Activated T-helper 2 cell treated with anti-CD3 and anti-CD28 coated beads, Interferon-gamma antibody, Interleukin-2, Interleukin-4, amounts not matched to agents 10 μg/mL and 5 μg/mL and 100 μg/mL, durations not matched to agents 14 hours and 24 hours and 36 hours (primary cell): ENCODE measurements at regions of chr14 and their contacts with region 1.

Region 1: GRCh38 chr14:39229222-39229543 is 4.5 kb upstream of the MIA2 start:
- DNase-seq: peak; percentile 73
- H3K4me3 Mint-ChIP-seq: no peak overlapping the region
- H3K27ac Mint-ChIP-seq: peak overlapping the region; percentile 93
- H3K4me1 Mint-ChIP-seq: peaks cover 48% of the 10 kb centered on the region
- H3K27me3 Mint-ChIP-seq: no peaks in the 10 kb centered on the region

Region 2: GRCh38 chr14:38567703-38568102 is 661.5 kb before region 1 on chr14:
- intact Hi-C with region 1: no loop called
- DNase-seq: no peak
- H3K4me3 Mint-ChIP-seq: peak overlapping the region; percentile 7
- H3K27ac Mint-ChIP-seq: no peak overlapping the region
- H3K4me1 Mint-ChIP-seq: peaks cover 7% of the 10 kb centered on the region
- H3K27me3 Mint-ChIP-seq: no peaks in the 10 kb centered on the region

Region 3: DNA sequence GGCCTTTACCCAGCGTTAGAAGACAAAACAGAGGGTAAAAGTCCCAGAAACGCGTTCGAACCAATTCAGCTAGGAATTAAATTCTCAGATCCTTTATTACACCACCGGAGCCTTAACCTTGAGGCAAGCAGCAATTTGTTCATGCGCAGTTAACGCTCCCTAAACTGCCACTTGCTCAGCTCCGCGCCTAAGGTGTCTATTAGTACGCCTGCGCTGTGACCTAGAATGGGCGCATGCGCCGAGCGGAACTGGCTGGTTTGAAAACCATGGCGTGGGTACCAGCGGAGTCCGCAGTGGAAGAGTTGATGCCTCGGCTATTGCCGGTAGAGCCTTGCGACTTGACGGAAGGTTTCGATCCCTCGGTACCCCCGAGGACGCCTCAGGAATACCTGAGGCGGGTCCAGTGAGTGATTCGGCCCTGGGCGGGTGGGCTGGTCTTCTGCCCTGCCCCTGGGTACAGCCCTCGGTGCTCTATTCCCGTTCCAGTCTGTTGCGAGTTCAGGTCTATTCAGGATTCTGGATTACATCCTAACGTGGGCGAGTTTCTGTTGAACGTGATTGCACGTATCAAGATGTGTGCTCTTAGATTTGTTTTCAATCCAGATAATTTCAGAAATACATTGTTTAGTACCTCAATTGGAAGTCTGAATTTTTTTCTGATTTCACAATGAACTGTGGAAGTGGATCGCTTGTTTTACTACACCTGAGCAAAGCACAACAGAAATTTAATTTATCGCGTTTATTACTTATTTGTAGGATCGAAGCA is 114.9 kb before region 1 on chr14 and contains the start of gene GEMIN2:
- intact Hi-C with region 1: loop called (anchors 2 kb)
- DNase-seq: peak; percentile 94
- H3K4me3 Mint-ChIP-seq: peak within 1 kb of the TSS; percentile 96
- H3K27ac Mint-ChIP-seq: peak within 1 kb of the TSS; percentile 96
- H3K4me1 Mint-ChIP-seq: peaks cover 18% of the 10 kb centered on the region
- H3K27me3 Mint-ChIP-seq: no peaks in the 10 kb centered on the region
- total RNA-seq, gene GEMIN2: 22.0 and 22.1 TPM in 2 replicates

Region 4: GRCh38 chr14:39203659-39204606 is 25.2 kb before region 1 on chr14:
- intact Hi-C with region 1: loop called (anchors 1 kb)
- DNase-seq: no peak
- H3K4me3 Mint-ChIP-seq: no peak overlapping the region
- H3K27ac Mint-ChIP-seq: no peak overlapping the region
- H3K4me1 Mint-ChIP-seq: peaks cover 23% of the 10 kb centered on the region
- H3K27me3 Mint-ChIP-seq: no peaks in the 10 kb centered on the region

Region 5: GRCh38 chr14:39342768-39343167 is 113.6 kb after region 1 on chr14:
- intact Hi-C with region 1: loop called (anchors 1 kb)
- DNase-seq: no peak
- H3K4me3 Mint-ChIP-seq: no peak overlapping the region
- H3K27ac Mint-ChIP-seq: no peak overlapping the region
- H3K4me1 Mint-ChIP-seq: peaks cover 25% of the 10 kb centered on the region
- H3K27me3 Mint-ChIP-seq: no peaks in the 10 kb centered on the region

Region 6: GRCh38 chr14:39383026-39383660 is 154.0 kb after region 1 on chr14:
- intact Hi-C with region 1: loop called (anchors 2 kb)
- DNase-seq: no peak
- H3K4me3 Mint-ChIP-seq: no peak overlapping the region
- H3K27ac Mint-ChIP-seq: peak overlapping the region; percentile 36
- H3K4me1 Mint-ChIP-seq: peaks cover 37% of the 10 kb centered on the region
- H3K27me3 Mint-ChIP-seq: no peaks in the 10 kb centered on the region